ENCODE measurements at regions of chr7 and their contacts with region 1.

Region 1: DNA sequence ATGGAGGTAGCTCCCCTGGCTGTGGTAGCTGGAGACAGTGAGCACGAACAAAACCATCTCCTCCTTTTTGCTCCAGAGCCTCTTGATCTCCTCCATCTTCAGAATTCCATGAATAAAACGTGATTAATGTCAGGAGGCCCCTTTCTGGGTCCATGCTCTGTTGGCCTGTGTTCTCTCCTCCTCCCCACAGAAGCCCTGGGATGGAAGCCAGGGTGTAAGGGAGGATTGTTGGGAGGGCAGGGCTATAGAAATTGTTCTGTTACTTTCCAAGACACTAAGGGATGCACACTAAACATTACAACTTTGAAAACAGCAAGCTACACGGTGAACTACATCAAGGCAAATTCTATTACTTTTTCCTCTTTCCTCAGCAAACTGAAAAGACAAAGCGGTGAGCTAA is 96.3 kb downstream of the RNF216 start:
- DNase-seq: no peak
- ATAC-seq: no peak
- H3K4me3 ChIP-seq: no peak overlapping the region
- H3K4me3 Mint-ChIP-seq: no peak overlapping the region
- H3K27ac ChIP-seq: peak overlapping the region in 1 of 2 donors; percentile 62
- H3K27ac Mint-ChIP-seq: peak overlapping the region; percentile 83
- H3K4me1 ChIP-seq: peaks cover 79 to 92% of the 10 kb centered on the region in 2 donors
- H3K4me1 Mint-ChIP-seq: peaks cover 79% of the 10 kb centered on the region
- H3K27me3 ChIP-seq: no peaks in the 10 kb centered on the region
- H3K27me3 Mint-ChIP-seq: no peaks in the 10 kb centered on the region
- CTCF ChIP-seq: no peak

Region 2: GRCh38 chr7:5704534-5704922 is 19.3 kb after region 1 on chr7:
- CTCF ChIA-PET with region 1: interaction called, 144 read pairs
- POLR2A ChIA-PET with region 1: interaction called, 6 read pairs
- intact Hi-C with region 1: no loop called
- DNase-seq: peak; percentile 87
- ATAC-seq: peak; percentile 54
- H3K4me3 ChIP-seq: no peak overlapping the region
- H3K4me3 Mint-ChIP-seq: no peak overlapping the region
- H3K27ac ChIP-seq: no peak overlapping the region
- H3K27ac Mint-ChIP-seq: no peak overlapping the region
- H3K4me1 ChIP-seq: peaks cover 15 to 30% of the 10 kb centered on the region in 2 donors
- H3K4me1 Mint-ChIP-seq: peaks cover 35% of the 10 kb centered on the region
- H3K27me3 ChIP-seq: no peaks in the 10 kb centered on the region
- H3K27me3 Mint-ChIP-seq: no peaks in the 10 kb centered on the region
- CTCF ChIP-seq: peak; percentile 93

Measured in B cell (primary cell).